ENCODE measurements at regions of chr19 and their contacts with region 1.

Region 1: DNA sequence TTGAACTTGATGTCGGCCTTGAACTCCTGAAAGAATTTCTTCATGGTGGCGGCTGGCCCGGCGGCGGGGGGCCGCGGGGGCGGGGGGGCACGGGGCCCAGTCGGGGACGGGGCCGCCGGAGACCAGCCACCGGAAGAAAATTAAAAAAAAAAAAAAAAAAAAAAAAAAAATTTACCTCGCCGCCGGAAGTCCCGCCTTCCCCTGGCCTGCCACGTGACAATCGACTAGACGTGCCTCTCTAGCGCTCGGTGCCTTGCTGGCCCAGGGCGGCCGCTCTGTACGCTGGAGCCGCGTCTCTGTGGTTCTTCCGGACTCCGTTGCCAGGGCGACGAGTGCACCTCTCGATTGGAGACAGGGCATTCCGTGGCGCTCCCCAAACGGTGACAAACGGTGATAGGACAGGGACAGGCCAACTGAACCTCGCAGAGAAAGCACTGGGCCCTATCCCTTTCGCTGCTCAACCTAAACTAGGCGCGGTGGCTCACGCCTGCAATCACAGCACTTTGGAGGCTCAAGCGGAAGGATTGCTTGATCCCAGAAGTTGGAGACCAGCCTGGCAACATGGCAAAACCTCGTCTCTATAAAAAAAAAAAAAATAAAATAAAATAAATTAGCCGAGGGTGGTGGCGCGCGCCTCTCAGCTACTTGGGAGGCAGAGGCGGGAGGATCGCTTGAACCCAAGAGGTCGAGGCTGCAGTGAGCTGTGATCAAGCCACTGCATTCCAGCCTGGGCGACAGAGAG is at the start of gene UBXN6:
- DNase-seq: peak; percentile 75
- ATAC-seq: peak; percentile 94
- H3K4me3 ChIP-seq: peak within 1 kb of the TSS; percentile 61 to 76
- H3K27ac ChIP-seq: peak within 1 kb of the TSS; percentile 73
- H3K4me1 ChIP-seq: no peaks in the 10 kb centered on the region
- H3K27me3 ChIP-seq: no peaks in the 10 kb centered on the region
- CTCF ChIP-seq: no peak
- total RNA-seq, gene UBXN6: 55.6 TPM

Region 2: GRCh38 chr19:2912306-2912705 is 1545.5 kb before region 1 on chr19:
- CTCF ChIA-PET with region 1: no interaction called
- POLR2A ChIA-PET with region 1: no interaction called
- in situ Hi-C with region 1: no loop called
- intact Hi-C with region 1: no loop called
- DNase-seq: no peak
- ATAC-seq: no peak
- H3K4me3 ChIP-seq: no peak overlapping the region
- H3K27ac ChIP-seq: no peak overlapping the region
- H3K4me1 ChIP-seq: no peaks in the 10 kb centered on the region
- H3K27me3 ChIP-seq: no peaks in the 10 kb centered on the region
- CTCF ChIP-seq: no peak

Region 3: DNA sequence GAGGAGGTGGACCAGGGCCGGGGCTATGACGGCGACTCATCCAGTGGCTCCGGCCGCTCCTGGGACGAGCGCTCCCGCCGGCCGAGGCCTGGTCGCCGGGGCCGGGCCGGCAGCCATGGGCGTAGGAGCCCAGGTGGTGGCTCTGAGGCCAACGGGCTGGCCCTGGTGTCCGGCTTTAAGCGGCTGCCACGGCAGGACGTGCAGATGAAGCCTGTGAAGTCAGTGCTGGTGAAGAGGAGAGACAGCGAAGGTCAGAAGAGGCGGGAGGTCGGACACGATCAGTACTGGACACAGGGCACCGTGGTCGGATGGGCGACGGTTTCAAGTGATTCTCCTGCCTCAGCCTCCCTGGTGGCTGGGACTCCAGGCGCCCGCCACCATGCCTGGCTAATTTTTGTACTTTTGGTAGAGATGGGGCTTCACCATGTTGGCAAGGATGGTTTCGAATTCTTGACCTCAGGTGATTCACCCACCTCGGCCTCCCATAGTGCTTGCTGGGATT is 727.3 kb before region 1 on chr19:
- CTCF ChIA-PET with region 1: no interaction called
- POLR2A ChIA-PET with region 1: interaction called, 14 read pairs
- in situ Hi-C with region 1: no loop called
- intact Hi-C with region 1: no loop called
- DNase-seq: no peak
- ATAC-seq: no peak
- H3K4me3 ChIP-seq: no peak overlapping the region
- H3K27ac ChIP-seq: no peak overlapping the region
- H3K4me1 ChIP-seq: no peaks in the 10 kb centered on the region
- H3K27me3 ChIP-seq: no peaks in the 10 kb centered on the region
- CTCF ChIP-seq: no peak

Region 4: DNA sequence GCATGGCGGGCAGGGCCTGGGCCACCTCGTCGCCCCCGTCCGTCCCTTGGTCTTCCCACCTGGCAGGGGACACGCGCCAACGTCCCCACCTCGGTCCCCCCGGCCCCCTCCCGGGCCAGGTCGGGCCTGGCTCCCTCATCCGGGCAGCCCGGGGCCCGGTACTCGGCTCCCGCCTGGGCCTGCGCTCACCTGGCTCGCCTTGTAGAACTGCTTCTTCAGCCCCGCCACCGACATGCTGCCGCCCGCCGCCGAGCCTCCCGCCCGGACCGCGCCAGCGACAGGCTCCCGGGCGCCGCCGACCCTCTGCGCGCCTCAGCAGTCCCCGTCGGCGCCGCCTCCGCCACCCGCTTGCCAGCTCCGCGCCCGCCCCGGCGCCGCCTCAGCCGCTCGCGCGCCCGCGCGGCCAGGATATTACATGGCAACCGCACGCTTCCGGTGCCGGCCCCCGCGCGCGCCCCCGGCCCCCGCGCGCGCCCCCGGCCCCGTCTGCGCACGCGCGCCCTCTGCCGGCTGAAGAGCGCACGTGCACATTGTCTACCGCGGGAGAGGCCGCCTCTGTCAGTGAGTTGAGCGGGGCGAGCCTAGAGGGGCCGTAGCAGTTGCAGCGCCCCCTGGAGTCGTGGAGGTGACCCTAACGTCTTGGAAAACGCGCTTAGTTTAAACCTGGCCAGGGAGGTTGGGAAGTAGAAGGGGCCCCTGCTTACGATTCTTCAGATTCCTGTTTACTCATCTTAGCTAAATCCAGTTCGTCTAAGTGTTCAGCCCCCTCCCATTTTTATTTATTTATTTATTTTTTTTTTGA is 57.5 kb before region 1 on chr19 and contains the start of gene SH3GL1:
- CTCF ChIA-PET with region 1: no interaction called
- POLR2A ChIA-PET with region 1: interaction called, 11 read pairs
- in situ Hi-C with region 1: no loop called
- intact Hi-C with region 1: no loop called
- DNase-seq: peak; percentile 45
- ATAC-seq: peak; percentile 85
- H3K4me3 ChIP-seq: peak within 1 kb of the TSS; percentile 80 to 92
- H3K27ac ChIP-seq: peak within 1 kb of the TSS; percentile 89
- H3K4me1 ChIP-seq: peaks cover 10% of the 10 kb centered on the region
- H3K27me3 ChIP-seq: no peaks in the 10 kb centered on the region
- CTCF ChIP-seq: peak; percentile 99
- total RNA-seq, gene SH3GL1: 57.1 TPM

Region 5: GRCh38 chr19:4754248-4754647 is 296.4 kb after region 1 on chr19:
- CTCF ChIA-PET with region 1: no interaction called
- POLR2A ChIA-PET with region 1: no interaction called
- in situ Hi-C with region 1: no loop called
- intact Hi-C with region 1: no loop called
- DNase-seq: no peak
- ATAC-seq: no peak
- H3K4me3 ChIP-seq: no peak overlapping the region
- H3K27ac ChIP-seq: no peak overlapping the region
- H3K4me1 ChIP-seq: no peaks in the 10 kb centered on the region
- H3K27me3 ChIP-seq: no peaks in the 10 kb centered on the region
- CTCF ChIP-seq: no peak

Region 6: GRCh38 chr19:4951656-4952055 is 493.8 kb after region 1 on chr19:
- CTCF ChIA-PET with region 1: no interaction called
- POLR2A ChIA-PET with region 1: interaction called, 11 read pairs
- in situ Hi-C with region 1: no loop called
- intact Hi-C with region 1: no loop called
- DNase-seq: no peak
- ATAC-seq: no peak
- H3K4me3 ChIP-seq: no peak overlapping the region
- H3K27ac ChIP-seq: no peak overlapping the region
- H3K4me1 ChIP-seq: no peaks in the 10 kb centered on the region
- H3K27me3 ChIP-seq: no peaks in the 10 kb centered on the region
- CTCF ChIP-seq: no peak

Measured in Panc1 (cell line).